RWPE1 (cell line): ENCODE measurements at regions of chr11 and their contacts with region 1.

Region 1: DNA sequence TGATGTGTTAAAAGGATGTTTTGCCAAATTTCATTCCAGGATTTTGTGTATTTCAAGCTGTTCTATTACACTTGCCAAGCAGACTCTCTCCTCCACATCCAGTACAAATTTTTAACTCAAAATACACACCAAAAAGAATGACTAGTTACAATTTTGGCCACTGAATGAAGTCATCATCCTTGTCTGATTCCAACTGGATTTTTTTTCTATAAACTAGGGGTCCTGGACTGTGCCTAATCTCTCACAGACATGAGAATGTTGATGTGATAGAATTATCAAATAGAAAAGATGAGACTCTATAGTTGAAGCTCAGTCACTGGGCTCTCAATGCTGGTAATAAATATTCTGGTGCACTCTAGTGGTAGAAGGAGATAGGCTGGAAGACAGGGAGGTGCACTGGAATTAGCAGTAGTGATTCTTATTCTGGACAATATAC is 85.8 kb downstream of the FANCF start:
- DNase-seq: peak; percentile 52
- H3K27ac ChIP-seq: no peak overlapping the region
- CTCF ChIP-seq: peak; percentile 70

Region 2: GRCh38 chr11:22337596-22338485 is 202.0 kb before region 1 on chr11 and contains the start of gene SLC17A6:
- CTCF ChIA-PET with region 1: interaction called, 10 read pairs
- POLR2A ChIA-PET with region 1: no interaction called
- DNase-seq: peak; percentile 42
- H3K27ac ChIP-seq: no peak within 1 kb of the TSS
- CTCF ChIP-seq: no peak

Region 3: DNA sequence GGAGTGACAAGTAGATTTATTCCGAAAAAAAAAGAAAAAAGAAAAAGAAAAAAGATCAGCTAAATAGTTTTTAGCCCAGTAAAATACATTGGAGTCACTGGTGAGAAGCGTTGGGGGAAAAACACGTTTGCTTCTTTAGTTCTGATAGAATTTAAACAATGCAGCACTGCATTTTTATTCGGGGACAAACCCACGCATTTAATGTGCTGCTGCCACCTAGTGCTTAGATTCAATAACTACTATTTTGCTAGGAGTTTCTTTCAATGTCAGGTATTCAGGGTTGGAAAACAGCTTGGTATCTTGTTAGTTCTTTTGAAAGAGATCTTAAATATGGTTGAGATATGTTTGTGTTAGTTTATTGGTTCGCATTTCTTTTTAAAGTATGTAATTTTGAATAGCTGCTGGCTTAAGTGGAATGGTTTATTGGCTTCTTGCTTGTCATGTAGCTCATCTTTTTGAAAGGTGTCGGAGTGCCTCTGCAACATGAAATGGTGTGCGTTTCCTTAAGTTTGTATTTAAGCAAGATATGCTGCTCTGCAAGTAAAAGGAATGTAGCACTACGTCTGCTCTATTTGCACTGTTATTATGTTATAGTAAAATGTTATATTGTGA is 247.8 kb after region 1 on chr11:
- CTCF ChIA-PET with region 1: interaction called, 11 read pairs
- POLR2A ChIA-PET with region 1: no interaction called
- DNase-seq: peak; percentile 34
- H3K27ac ChIP-seq: no peak overlapping the region
- CTCF ChIP-seq: peak; percentile 77